Activated T-helper 1 cell treated with anti-CD3 and anti-CD28 coated beads, Interleukin-12 subunit alpha, Interleukin-12 subunit beta, Interleukin-2, Interleukin-4 antibody, amounts not matched to agents 30 ng/mL and 10 ng/mL and 1 ng/mL, durations not matched to agents 14 hours and 24 hours and 36 hours (primary cell): ENCODE measurements at regions of chr16 and their contacts with region 1.

Region 1: DNA sequence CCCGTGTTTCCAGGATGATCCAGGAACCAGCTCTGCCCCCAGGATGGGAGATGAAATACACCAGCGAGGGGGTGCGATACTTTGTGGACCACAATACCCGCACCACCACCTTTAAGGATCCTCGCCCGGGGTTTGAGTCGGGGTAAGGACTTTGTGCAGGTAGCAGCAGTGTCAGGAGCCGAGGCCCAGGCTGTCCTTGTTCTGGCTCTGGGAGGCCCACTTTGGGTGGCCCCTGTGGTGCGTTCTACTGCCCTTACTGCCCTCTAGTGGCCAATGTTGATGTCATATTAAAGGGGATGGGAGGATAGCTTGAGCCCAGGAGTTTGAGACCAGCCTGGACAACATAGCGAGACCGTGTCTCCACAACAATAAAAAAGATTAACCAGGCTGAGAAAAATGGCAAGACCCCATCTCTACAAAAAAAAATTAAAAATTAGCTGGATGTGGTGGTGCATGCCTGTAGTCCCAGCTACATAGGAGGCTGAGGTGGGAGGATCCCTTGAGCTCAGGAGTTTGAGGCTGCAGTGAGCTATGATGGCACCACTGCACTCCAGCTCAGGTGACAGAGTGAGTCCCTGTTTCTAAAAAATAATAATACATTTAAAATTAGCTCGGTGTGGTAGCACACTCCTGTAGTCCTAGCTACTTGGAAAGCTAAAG is 20.9 kb upstream of the CLEC18A start:
- DNase-seq: peak; percentile 21
- H3K4me3 Mint-ChIP-seq: no peak overlapping the region
- H3K27ac Mint-ChIP-seq: no peak overlapping the region
- H3K4me1 Mint-ChIP-seq: no peaks in the 10 kb centered on the region
- H3K27me3 Mint-ChIP-seq: no peaks in the 10 kb centered on the region

Region 2: DNA sequence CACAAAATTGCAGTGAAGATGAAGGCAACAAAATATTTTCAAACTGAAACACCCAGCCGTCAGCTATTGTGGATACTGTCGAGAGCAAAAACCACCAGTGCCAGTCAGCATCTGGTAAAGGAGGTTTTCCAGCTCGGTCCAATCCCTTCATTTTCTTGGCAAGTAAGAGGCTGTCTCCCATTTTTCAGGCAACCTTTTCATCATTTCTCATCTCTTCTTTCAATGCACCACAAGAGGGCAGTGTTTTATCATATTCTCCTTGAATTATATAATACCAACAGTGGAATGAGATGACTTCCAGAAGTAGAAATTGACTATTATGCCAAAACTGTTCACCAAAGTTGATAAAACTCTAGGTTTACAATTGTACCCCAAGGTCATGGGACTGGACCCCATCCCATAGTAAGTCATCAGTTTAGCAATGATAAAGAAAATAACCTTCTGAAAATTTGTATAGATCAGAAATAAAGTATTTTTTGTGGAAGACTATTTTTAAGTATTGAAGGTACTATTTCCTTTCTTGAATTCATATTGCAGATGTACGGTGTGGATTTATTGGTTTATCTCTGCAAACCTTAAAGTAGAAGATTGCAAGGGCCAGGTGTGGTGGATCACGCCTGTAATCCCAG is 220.7 kb before region 1 on chr16:
- intact Hi-C with region 1: loop called (anchors 1 kb)
- DNase-seq: no peak
- H3K4me3 Mint-ChIP-seq: no peak overlapping the region
- H3K27ac Mint-ChIP-seq: no peak overlapping the region
- H3K4me1 Mint-ChIP-seq: peaks cover 7% of the 10 kb centered on the region
- H3K27me3 Mint-ChIP-seq: no peaks in the 10 kb centered on the region

Region 3: GRCh38 chr16:69796351-69797118 is 133.7 kb before region 1 on chr16:
- intact Hi-C with region 1: loop called (anchors 1 kb)
- DNase-seq: peak; percentile 6
- H3K4me3 Mint-ChIP-seq: no peak overlapping the region
- H3K27ac Mint-ChIP-seq: no peak overlapping the region
- H3K4me1 Mint-ChIP-seq: no peaks in the 10 kb centered on the region
- H3K27me3 Mint-ChIP-seq: no peaks in the 10 kb centered on the region